MCF 10A (cell line): ENCODE measurements at regions of chr10 and their contacts with region 1.

Region 1: DNA sequence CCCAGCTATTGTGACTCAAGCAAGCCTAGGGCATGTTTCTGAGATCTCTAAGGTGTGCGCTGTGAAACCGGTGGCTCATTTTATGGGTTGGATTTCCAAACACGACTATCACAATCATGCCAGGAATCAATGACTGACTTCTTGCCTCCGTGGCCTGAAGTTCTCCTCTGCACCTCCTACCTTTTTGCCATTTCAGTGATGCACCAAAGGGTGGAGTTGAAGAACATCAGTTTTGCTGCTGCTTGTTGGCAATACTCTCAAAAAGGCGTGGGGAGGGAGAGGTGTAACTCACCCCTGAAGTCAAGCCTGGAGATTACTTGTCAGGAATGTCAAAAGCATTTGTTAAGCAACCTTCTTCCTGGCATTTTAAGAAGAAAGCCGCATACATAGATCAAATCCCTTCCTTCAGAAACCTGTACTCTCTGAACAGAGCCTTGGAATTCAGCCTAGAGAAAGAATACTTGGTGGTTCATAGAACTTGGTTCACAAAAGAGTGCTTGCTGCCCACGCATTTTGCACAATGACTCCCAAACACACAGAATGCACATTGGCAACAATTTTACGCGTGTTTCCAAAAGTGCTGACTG is 41.0 kb downstream of the KIAA1217 start:
- DNase-seq: peak; percentile 90
- H3K4me3 Mint-ChIP-seq: peak overlapping the region; percentile 28
- H3K27ac Mint-ChIP-seq: peak overlapping the region; percentile 91
- H3K4me1 Mint-ChIP-seq: peaks cover 32% of the 10 kb centered on the region
- H3K27me3 Mint-ChIP-seq: no peaks in the 10 kb centered on the region
- CTCF ChIP-seq: no peak

Region 2: GRCh38 chr10:24128066-24128730 is 121.7 kb before region 1 on chr10:
- CTCF ChIA-PET with region 1: no interaction called
- POLR2A ChIA-PET with region 1: no interaction called
- intact Hi-C with region 1: no loop called
- DNase-seq: no peak
- H3K4me3 Mint-ChIP-seq: no peak overlapping the region
- H3K27ac Mint-ChIP-seq: no peak overlapping the region
- H3K4me1 Mint-ChIP-seq: no peaks in the 10 kb centered on the region
- H3K27me3 Mint-ChIP-seq: peaks cover 52% of the 10 kb centered on the region
- CTCF ChIP-seq: no peak

Region 3: DNA sequence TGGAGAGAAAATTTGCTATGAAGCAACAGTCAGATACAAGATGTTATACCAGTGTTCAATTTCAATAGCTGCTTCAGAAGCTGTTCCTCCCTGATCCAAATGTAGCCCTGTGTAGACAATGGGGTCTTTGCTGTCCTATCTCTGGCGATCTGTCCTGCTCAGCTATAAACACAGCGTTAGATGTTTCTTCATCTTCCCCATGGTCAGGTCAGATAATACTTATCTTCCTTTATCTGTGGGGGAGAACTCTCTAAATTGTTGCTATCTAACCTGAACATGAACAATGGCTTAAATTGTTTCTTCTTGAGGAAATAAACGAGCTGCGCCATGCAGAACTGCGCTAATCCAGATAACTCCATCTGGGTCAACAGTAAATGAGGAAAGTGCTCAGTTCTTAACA is 56.6 kb before region 1 on chr10:
- CTCF ChIA-PET with region 1: no interaction called
- POLR2A ChIA-PET with region 1: no interaction called
- intact Hi-C with region 1: no loop called
- DNase-seq: no peak
- H3K4me3 Mint-ChIP-seq: no peak overlapping the region
- H3K27ac Mint-ChIP-seq: no peak overlapping the region
- H3K4me1 Mint-ChIP-seq: no peaks in the 10 kb centered on the region
- H3K27me3 Mint-ChIP-seq: peaks cover 17% of the 10 kb centered on the region
- CTCF ChIP-seq: no peak

Region 4: DNA sequence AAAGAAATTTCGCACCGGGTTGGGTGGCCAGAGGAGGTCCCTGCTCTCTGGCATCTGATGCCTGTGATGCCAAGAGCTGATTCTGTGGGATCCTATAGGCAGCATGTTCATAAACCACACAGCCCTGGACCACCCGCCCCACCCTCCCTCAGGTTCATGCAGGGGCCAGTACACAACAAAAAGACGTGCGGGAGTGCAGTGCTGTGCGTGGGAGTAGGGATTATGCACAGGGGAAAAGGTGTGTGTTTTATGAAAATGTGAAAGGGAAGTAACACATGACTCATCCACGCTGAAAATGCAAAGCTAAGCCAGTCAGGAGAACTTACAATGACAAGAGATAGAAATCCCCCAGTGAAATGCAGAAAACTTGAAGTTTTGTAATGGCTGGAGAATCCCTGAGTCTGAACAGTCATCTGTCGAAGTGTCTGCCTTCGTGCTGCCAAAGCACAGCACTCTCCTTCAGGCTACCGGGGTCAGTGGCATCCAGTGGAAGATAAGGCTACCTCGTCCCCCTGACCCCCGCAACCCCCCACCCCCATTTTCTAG is 39.9 kb before region 1 on chr10:
- CTCF ChIA-PET with region 1: interaction called, 3 read pairs
- POLR2A ChIA-PET with region 1: interaction called, 29 read pairs
- intact Hi-C with region 1: no loop called
- DNase-seq: peak; percentile 74
- H3K4me3 Mint-ChIP-seq: peak overlapping the region; percentile 76
- H3K27ac Mint-ChIP-seq: peak overlapping the region; percentile 1
- H3K4me1 Mint-ChIP-seq: peaks cover 22% of the 10 kb centered on the region
- H3K27me3 Mint-ChIP-seq: no peaks in the 10 kb centered on the region
- CTCF ChIP-seq: no peak

Region 5: GRCh38 chr10:24238519-24239252 is 11.2 kb before region 1 on chr10:
- CTCF ChIA-PET with region 1: interaction called, 11 read pairs
- POLR2A ChIA-PET with region 1: interaction called, 35 read pairs
- intact Hi-C with region 1: no loop called
- DNase-seq: peak; percentile 67
- H3K4me3 Mint-ChIP-seq: peak overlapping the region; percentile 63
- H3K27ac Mint-ChIP-seq: no peak overlapping the region
- H3K4me1 Mint-ChIP-seq: peaks cover 19% of the 10 kb centered on the region
- H3K27me3 Mint-ChIP-seq: peaks cover 13% of the 10 kb centered on the region
- CTCF ChIP-seq: no peak